Activated CD4-positive, alpha-beta T cell treated with anti-CD3 and anti-CD28 coated beads, Interleukin-2, amount 10 ng/mL, durations not matched to agents 7 days and 5 days (primary cell): ENCODE measurements at regions of chr20 and their contacts with region 1.

Region 1: DNA sequence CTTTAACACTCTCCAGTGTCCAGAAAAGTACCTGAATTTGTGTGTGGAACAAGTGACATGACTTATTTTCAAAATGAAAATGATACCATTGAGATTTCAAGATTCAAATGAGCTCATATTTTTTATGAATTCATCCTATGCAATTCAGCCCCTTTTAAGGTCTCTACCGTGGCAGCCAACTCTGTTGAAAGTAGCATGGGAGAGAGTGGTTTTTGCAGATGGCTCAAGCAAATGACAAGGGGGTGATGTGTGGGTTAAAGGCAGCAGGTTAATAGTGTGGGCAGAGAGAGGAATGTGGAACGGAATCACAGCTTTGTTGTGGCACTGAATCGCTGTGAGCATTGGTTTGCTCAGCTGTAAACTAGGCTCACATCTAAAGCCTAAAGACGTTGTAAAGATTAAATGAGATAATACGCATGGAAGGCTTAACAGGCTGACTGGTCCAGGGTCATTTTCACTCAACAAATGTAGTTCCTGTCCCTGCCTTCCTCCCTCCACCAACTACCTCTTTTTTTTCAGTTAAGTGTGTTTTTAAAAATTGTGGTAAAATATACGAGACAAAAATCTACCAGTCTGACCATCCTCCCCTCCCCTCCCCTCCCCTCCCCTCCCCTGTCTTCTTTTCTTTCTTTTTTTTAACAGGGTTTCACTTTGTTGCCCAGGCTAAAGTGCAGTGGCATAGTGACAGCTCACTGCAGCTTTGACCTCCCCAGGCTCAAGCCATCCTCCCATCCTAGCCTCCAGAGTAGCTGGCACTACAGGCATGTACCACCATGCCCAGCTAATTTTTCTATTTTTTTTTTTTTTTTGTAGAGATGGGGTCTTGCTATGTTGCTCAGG is 114.7 kb upstream of the ZNF217 start:
- DNase-seq: peak; percentile 59
- H3K4me3 Mint-ChIP-seq: peak overlapping the region; percentile 56
- H3K27ac Mint-ChIP-seq: peak overlapping the region; percentile 95
- H3K4me1 Mint-ChIP-seq: peaks cover 68% of the 10 kb centered on the region
- H3K27me3 Mint-ChIP-seq: no peaks in the 10 kb centered on the region

Region 2: DNA sequence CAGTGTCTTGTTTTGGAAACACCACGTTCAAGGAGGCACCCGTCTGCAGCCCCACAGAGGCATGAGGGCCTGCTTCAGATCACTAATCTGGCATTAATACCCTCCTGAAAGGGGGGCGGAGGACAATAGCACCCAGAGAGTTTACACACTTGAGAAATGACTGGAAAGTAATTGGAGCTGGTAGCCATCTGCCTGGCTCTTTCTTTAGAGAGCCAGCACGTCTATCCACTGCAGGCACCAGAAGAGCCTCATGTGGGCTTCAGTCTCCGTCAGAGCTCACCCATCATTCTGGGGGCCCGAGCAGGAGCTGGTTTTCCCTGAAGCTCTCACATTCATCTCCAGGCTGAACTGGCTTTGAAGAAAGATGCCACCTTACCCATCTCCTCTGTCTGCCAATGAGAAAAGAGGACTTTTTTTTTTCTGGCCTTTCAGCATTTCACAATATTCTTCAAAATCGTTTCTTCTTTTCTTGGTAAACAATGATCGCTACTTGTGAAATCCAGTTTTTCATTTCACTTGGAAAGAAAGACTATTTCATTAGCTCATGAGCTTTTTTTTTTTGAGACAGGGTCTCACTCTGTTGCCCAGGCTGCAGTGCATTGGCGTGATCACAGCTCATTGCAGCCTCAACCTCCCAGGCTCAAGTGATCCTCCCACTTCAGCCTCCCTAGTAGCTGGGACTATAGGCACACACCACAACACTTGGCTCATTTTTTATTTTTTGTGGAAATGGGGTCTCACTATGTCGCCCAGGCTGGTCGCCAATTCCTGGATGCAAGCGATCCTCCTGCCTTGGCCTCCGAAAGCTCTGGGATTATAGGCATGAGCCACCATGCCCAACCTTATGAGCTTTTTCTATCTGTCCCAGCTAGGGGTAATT is 10.0 kb after region 1 on chr20:
- CTCF ChIA-PET with region 1: interaction called, 15 read pairs
- POLR2A ChIA-PET with region 1: no interaction called
- DNase-seq: no peak
- H3K4me3 Mint-ChIP-seq: no peak overlapping the region
- H3K27ac Mint-ChIP-seq: no peak overlapping the region
- H3K4me1 Mint-ChIP-seq: peaks cover 23% of the 10 kb centered on the region
- H3K27me3 Mint-ChIP-seq: no peaks in the 10 kb centered on the region